Lower leg skin (tissue), 4 donors: ENCODE measurements at regions of chr9 and their contacts with region 1.

Region 1: DNA sequence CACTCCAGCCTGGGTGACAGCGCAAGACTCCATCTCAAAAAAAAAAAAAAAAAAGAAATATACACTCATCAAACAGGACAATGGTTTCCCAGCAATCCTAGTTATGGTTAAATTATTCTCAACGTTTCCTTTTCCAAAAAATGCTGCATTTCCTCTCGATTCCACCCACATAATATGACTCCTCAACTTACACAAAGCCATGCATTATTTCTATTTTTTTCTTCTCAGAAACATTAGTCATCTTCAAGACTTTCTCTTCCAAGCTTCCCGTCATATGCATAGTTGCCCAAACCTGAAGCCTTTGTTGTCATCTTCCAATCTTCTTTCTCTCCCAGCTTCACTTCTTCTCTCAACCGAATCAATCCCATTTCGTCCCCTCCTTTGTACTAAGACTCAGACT is 61.4 kb upstream of the RANBP6 start:
- DNase-seq: no peak
- H3K4me3 ChIP-seq: no peak overlapping the region
- CTCF ChIP-seq: no peak
- POLR2A ChIP-seq: no peak

Region 2: GRCh38 chr9:5971740-5972139 is 105.1 kb before region 1 on chr9:
- intact Hi-C with region 1: no loop called
- DNase-seq: no peak
- H3K4me3 ChIP-seq: no peak overlapping the region
- CTCF ChIP-seq: no peak
- POLR2A ChIP-seq: no peak

Region 3: DNA sequence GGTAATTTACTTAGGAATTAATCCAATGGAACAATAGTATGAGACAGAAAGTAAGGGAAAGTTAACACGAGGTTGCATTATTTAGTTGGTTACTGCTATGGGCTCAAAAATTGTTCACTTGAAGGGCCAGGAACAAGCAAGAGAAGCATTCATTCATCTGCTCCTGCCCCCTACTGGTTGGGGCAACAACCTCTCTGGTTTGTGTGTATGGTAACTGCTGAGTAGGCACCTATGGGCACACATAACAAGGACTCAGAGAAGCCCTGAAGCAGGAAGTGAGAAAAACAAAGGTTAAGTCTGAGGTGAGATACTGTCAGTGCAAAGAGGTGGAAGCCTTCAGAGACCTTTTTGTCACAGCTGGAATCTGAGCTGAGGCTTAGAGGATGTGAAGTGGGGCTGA is 27.1 kb before region 1 on chr9:
- intact Hi-C with region 1: no loop called
- DNase-seq: no peak
- H3K4me3 ChIP-seq: no peak overlapping the region
- CTCF ChIP-seq: no peak
- POLR2A ChIP-seq: no peak

Region 4: DNA sequence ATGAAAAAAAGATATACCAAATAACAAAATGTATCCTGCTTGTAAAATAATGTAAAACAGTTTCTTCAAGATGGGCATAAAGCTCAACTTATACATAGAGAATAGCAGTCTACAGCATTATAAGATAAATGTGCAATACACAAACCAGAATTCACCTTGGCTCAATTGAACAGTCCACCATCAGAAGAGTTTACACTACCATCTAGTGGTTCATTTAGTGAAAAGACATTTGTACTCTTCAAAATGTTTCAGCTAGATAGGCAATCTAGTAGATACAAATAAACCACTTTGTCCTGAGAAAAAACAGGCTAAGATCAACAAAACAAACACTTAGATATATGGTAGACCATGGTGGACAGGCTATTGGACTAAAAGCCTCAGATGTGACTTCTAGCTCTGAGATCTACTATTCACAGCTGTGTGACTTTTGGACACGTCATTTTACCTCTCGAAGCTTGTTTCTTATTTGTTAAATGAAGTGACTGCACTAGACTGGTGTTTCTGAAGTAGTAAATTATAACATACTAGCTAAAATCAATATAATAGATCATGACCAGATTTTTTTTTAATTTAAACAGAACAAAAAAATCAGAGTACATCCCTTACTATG is 229.2 kb after region 1 on chr9:
- intact Hi-C with region 1: loop called (anchors 10 kb)
- DNase-seq: no peak
- H3K4me3 ChIP-seq: no peak overlapping the region
- CTCF ChIP-seq: no peak
- POLR2A ChIP-seq: no peak